SK-N-SH (cell line): ENCODE measurements at regions of chr5 and their contacts with region 1.

Region 1: DNA sequence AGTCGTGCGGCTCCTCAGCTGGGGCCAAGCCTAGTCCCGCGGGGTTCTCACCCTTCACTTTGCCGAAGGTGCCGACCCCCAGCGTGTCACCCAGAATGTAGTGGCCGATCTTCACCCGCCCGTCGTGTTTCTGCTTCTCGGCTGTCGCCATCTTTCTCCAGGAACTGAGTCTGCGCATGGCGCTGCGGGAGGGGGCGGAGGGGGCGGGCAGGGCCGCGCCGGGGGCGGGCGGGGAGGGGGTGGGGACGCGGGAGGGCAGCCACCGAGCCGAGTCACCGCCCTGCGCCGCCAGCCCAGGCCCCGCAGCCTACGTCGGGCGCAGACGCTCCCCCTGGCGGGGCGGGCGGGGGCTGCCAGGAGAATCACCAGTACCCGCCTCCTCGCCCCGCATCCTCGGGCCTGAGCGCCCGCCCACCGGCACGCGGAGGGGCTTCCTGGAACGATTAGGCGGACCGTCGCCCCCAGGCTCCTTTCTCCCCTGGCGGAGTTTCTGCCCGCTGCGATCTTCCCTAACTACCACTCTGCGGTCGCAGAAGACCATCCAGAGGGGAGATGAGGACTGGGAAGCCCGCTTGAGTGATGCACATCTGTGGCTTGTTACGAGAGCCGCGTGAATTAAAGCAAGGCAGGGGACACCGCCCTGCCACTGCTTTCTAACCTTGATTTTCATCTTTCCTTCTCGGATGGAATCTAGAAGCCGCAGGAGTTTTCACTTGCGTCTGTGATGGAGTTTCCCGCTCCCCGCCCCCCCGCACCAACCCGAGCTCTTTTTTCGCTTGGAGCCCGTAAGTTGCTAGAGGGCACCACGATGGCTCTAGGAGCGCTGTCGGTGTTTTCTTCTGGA is at the start of gene PRKAA1:
- DNase-seq: peak; percentile 98
- H3K4me3 ChIP-seq: peak within 1 kb of the TSS; percentile 89 to 93
- H3K27ac ChIP-seq: peak within 1 kb of the TSS; percentile 91 to 96
- H3K4me1 ChIP-seq: peaks cover 4 to 11% of the 10 kb centered on the region in 2 experiments; a peak in 2 of 4 replicates
- H3K27me3 ChIP-seq: no peaks in the 10 kb centered on the region
- CTCF ChIP-seq: peak; percentile 44
- EP300 ChIP-seq: no peak
- RAD21 ChIP-seq: peak; percentile 5; the same call in 1 of the 2 replicates
- polyA plus RNA-seq, gene PRKAA1: 23.2 and 34.4 TPM in 2 replicates

Region 2: DNA sequence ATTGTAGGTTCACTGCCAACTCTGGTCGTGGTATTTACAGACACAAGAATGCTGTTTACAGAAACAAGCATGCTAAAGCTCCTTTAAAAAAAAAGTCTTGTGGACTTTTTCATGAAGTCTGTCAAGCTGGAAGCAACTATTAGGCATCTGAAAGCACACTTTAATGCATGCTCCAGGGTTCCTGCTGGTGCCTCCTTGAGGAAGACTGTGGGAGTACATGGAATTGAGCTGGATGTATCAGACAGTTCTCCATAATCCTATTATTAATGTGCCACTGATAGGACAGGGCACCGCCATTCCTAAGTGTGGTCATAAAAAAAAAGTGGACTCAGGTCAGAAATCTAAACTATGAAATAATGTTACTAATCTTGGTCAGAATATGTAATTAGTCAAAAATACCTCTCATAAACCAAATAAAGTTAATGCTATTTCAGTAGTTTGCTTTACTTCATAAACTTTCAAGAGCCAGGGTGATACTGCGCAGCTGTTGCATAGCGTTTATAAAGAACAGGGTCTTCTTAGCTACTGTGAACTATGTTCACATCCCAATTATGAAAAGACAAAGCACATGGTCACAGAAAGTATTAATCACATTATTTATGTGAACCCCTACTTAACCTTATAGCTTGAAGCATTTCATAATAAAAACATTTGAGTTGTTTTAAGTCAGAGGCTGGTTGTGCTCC is 509.3 kb before region 1 on chr5:
- CTCF ChIA-PET with region 1: no interaction called
- POLR2A ChIA-PET with region 1: no interaction called
- DNase-seq: no peak
- H3K4me3 ChIP-seq: no peak overlapping the region
- H3K27ac ChIP-seq: no peak overlapping the region
- H3K4me1 ChIP-seq: no peaks in the 10 kb centered on the region
- H3K27me3 ChIP-seq: no peaks in the 10 kb centered on the region; the same call in 1 of the 2 replicates
- CTCF ChIP-seq: no peak
- EP300 ChIP-seq: no peak
- RAD21 ChIP-seq: no peak

Region 3: GRCh38 chr5:40578501-40579451 is 219.5 kb before region 1 on chr5:
- CTCF ChIA-PET with region 1: no interaction called
- POLR2A ChIA-PET with region 1: no interaction called
- DNase-seq: no peak
- H3K4me3 ChIP-seq: no peak overlapping the region
- H3K27ac ChIP-seq: no peak overlapping the region
- H3K4me1 ChIP-seq: no peaks in the 10 kb centered on the region
- H3K27me3 ChIP-seq: peaks cover 11% of the 10 kb centered on the region; the same call in 1 of the 2 replicates
- CTCF ChIP-seq: no peak
- EP300 ChIP-seq: no peak
- RAD21 ChIP-seq: no peak

Region 4: DNA sequence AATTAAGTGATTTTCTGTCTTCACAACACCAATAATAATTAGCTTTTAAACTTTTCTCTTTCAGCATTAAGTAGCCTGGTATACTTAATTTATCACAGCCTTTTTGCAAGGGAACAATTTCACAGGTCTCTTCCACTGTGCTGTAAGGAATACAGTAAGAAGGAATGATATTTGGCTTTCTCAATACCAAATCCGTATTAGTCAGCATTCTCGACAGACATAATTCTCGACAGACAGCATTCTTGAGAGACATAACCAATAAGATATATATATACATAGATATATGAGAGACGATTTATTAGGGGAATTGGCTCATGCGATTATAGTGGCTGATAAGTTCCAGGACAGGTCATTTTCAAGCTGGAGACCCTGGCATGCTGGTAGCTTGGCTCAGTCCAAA is 18.0 kb before region 1 on chr5:
- CTCF ChIA-PET with region 1: no interaction called
- POLR2A ChIA-PET with region 1: no interaction called
- DNase-seq: no peak
- H3K4me3 ChIP-seq: no peak overlapping the region
- H3K27ac ChIP-seq: no peak overlapping the region
- H3K4me1 ChIP-seq: peaks cover 0 to 11% of the 10 kb centered on the region in 2 experiments; a peak in 2 of 4 replicates
- H3K27me3 ChIP-seq: no peaks in the 10 kb centered on the region
- CTCF ChIP-seq: no peak
- EP300 ChIP-seq: no peak
- RAD21 ChIP-seq: no peak

Region 5: DNA sequence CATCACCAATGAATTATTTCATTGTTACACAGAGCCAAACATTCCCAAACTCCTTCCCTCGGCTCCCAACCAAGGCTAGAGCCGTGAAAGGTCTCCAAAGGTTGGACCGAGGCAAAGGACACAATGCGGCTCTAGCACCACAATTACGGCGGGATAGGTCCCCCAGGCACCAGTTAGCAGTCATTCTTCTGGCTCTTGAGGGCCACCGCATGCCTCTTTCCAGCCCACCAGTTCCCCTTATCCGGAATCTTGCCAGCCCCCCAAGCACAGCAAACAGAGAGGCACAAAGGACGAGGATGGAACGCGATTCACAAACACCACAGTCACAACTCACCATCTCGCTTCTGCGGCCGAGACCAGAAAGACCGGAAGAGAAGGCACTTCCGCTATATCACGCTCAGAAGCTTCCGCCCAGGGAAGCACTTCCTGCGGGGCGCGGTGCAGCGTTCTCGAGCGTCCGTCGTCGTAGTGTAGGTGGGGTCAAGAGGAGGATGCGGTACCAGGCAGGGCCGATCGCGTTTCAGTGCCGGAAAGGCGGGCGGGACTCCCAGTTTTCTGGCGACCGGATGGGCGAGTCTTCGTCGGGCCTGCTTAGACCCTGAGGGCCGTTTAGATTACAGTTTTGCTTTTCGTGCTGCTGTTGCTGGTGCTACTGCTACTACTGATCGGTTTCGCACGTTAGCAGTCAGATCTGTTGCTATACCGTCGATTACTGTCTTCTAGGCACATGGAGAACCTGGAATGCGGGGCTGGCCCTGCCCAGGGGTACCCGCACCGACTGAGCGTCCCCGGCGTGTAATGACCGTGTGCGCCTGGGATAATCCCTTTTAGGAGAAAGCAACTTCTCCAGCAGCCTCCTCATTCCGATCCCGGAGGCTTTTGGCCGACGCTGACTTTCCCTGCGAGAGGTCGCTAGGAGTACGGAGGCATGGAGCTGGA is 36.9 kb after region 1 on chr5 and contains the start of gene RPL37:
- CTCF ChIA-PET with region 1: interaction called, 3 read pairs
- POLR2A ChIA-PET with region 1: interaction called, 23 read pairs
- DNase-seq: peak; percentile 90
- H3K4me3 ChIP-seq: peak within 1 kb of the TSS; percentile 81 to 87
- H3K27ac ChIP-seq: peak within 1 kb of the TSS; percentile 96 to 97
- H3K4me1 ChIP-seq: peaks cover 13 to 24% of the 10 kb centered on the region in 2 experiments; a peak in 3 of 4 replicates
- H3K27me3 ChIP-seq: no peaks in the 10 kb centered on the region
- CTCF ChIP-seq: no peak
- EP300 ChIP-seq: peak in 1 of 2 experiments; percentile 48; a peak in 1 of 4 replicates
- RAD21 ChIP-seq: no peak
- polyA plus RNA-seq, gene RPL37: 297 and 465 TPM in 2 replicates